ENCODE measurements at regions of chr3 and their contacts with region 1.

Region 1: GRCh38 chr3:196159952-196160804 is 51.0 kb downstream of the ZDHHC19 start:
- DNase-seq: peak in 1 of 2 donors; percentile 48
- ATAC-seq: no peak
- H3K4me3 ChIP-seq: no peak overlapping the region
- H3K27ac ChIP-seq: no peak overlapping the region
- H3K4me1 ChIP-seq: peaks cover 9% of the 10 kb centered on the region
- H3K27me3 ChIP-seq: no peaks in the 10 kb centered on the region
- CTCF ChIP-seq: no peak

Region 2: GRCh38 chr3:196081791-196082618 is 78.2 kb before region 1 on chr3 and contains the start of gene TFRC:
- intact Hi-C with region 1: loop called in 1 of 2 experiments (anchors 1 kb)
- DNase-seq: peak; percentile 97 to 98
- ATAC-seq: peak; percentile 96 to 97 (median 96)
- H3K4me3 ChIP-seq: peak within 1 kb of the TSS; percentile 100
- H3K27ac ChIP-seq: peak within 1 kb of the TSS; percentile 100
- H3K4me1 ChIP-seq: peaks cover 35% of the 10 kb centered on the region
- H3K27me3 ChIP-seq: no peaks in the 10 kb centered on the region
- CTCF ChIP-seq: no peak
- total RNA-seq, gene TFRC: 36.2 to 101 (median 63.0) TPM

Region 3: DNA sequence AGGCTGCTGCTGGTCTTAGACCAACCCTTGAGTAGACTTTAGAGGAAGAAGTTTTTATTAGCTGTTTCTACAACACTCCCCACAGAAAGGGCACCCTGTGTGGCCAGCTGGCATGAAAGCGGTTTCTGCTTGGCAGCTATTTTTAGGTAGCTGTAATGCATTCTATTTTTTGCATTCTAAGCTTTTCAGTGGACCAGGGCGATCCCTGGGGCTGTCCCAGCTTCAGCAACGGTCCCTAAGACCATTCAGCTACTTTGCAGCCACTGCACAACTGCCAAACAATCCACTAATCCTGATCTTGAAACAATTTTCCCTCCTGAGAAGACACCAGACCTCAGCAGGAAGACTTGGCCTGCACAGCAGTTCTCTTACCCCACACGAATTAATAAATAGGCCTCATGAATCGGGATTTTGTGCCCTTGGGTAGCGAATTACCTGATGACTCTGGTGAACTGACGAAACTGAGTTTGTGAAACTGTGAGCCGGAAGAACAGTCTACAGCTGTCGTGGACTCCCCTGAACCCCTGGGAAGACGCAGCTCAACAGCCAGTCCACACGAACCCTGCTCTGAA is 63.7 kb before region 1 on chr3:
- intact Hi-C with region 1: loop called in 1 of 2 experiments (anchors 5 kb)
- DNase-seq: peak; percentile 51 to 82
- ATAC-seq: peak; percentile 92 to 98 (median 96)
- H3K4me3 ChIP-seq: peak overlapping the region; percentile 40
- H3K27ac ChIP-seq: peak overlapping the region; percentile 84
- H3K4me1 ChIP-seq: peaks cover 19% of the 10 kb centered on the region
- H3K27me3 ChIP-seq: no peaks in the 10 kb centered on the region
- CTCF ChIP-seq: no peak

Region 4: DNA sequence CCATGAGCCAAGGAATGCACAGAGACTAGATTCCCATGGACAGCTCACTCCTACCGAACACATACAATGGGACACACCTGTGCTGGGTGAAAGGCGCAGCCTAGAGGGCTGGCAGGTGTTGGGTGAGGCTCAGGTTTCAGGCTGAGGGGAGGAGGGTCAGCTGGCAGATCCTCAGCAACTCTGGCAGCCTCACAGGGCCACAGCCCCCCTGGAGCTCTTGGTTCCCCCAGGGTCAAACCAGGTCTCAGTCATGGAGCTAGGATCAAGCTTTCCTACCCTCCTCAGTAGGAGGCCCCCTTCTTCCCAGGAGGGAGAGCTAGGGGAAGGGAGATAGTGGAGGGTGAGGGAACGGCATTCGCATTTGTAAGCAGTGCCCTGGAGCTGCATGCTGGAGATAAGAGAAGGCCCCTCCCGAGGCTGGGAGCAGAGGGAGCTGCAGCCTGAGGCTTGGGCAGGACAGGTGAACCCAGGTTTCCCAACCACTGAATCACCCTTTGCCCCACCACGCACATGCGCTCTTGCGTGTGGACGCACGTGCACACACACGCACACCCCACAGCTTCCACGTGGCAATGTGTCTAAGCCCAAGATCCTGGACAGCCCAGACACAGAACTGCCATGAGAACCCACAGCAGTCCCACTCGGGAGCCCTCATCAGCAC is 52.0 kb before region 1 on chr3:
- intact Hi-C with region 1: no loop called
- DNase-seq: no peak
- ATAC-seq: peak; percentile 36 to 48 (median 42)
- H3K4me3 ChIP-seq: no peak overlapping the region
- H3K27ac ChIP-seq: peak overlapping the region; percentile 58
- H3K4me1 ChIP-seq: no peaks in the 10 kb centered on the region
- H3K27me3 ChIP-seq: no peaks in the 10 kb centered on the region
- CTCF ChIP-seq: no peak

Region 5: DNA sequence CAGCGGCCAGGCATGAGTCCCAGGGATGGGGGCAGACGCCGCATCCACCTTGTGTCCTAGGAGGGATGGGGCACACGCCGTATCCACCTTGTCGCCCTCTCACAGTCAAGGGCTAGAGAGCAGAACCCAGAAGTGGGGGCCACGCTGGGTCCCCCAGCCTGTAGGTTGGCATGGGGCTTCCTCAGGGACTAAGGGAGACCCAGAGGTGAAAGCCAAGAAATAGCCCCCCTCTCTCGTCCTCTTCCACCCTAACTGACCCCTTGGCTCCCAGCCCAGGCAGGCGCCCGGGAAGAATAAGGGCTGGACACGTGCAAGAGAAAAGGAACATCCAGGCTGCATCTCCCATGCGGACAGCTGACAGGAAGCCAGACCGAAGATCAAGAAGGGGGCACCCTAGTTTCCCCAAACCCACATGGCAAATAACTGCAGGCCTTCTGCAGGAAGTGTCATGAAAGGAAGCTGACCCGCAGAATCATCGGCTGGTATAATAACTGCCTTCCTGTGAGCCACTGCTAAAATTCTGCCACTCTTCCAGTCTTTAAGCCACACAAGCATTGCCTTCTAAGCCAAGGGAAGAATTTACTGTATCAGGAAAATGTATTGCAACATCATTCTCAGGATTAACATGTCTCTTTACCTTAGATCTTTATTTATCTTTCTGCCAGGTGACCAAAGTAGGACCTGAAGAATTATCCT is 39.8 kb before region 1 on chr3:
- intact Hi-C with region 1: loop called in 1 of 2 experiments (anchors 5 kb)
- DNase-seq: peak in 1 of 2 donors; percentile 56
- ATAC-seq: no peak
- H3K4me3 ChIP-seq: no peak overlapping the region
- H3K27ac ChIP-seq: peak overlapping the region; percentile 1
- H3K4me1 ChIP-seq: peaks cover 10% of the 10 kb centered on the region
- H3K27me3 ChIP-seq: no peaks in the 10 kb centered on the region
- CTCF ChIP-seq: no peak

Region 6: GRCh38 chr3:196287440-196288148 is 127.4 kb after region 1 on chr3 and contains the start of gene PCYT1A:
- intact Hi-C with region 1: no loop called
- DNase-seq: peak; percentile 91 to 96
- ATAC-seq: peak; percentile 97
- H3K4me3 ChIP-seq: peak within 1 kb of the TSS; percentile 92
- H3K27ac ChIP-seq: peak within 1 kb of the TSS; percentile 98
- H3K4me1 ChIP-seq: peaks cover 41% of the 10 kb centered on the region
- H3K27me3 ChIP-seq: no peaks in the 10 kb centered on the region
- CTCF ChIP-seq: no peak
- total RNA-seq, gene PCYT1A: 58.8 to 98.4 (median 70.0) TPM